Lower leg skin (tissue), 4 donors: ENCODE measurements at regions of chr4 and their contacts with region 1.

Region 1: DNA sequence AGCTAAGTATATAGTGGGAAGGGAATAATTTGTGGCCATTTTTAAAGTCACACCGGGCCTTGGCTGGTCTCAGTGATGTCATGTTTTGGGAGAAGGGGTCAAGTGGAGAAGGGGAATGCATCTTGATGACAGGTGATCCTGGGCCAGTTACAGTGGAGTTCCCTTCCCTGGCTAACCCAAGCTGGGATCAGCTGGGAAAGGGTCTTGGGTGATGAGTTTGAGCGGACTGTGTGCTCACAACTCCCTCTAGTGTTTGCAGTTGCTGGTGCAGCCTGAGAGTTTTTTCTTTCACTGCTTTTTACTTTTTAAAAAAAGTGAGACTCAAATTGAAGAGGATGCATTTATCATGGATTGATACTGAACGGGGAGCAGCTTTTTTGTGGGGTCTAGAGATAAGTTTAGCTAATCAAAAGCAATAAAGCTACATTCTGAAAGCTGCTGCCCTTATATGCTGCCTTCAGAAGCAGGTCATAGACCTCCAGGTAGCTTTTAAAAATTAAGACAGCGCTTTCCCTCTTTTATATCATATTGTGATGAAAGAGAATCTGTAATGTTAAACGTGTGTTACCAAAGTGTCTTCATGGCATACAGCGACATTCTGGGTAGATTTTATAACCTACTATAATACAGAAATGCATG is 164.7 kb downstream of the DCLK2 start:
- DNase-seq: no peak
- H3K4me3 ChIP-seq: no peak overlapping the region
- CTCF ChIP-seq: no peak
- POLR2A ChIP-seq: no peak

Region 2: GRCh38 chr4:149980941-149981340 is 262.0 kb before region 1 on chr4:
- intact Hi-C with region 1: loop called (anchors 10 kb)
- DNase-seq: peak in 1 of 2 donors; percentile 85
- H3K4me3 ChIP-seq: no peak overlapping the region
- CTCF ChIP-seq: no peak
- POLR2A ChIP-seq: no peak

Region 3: DNA sequence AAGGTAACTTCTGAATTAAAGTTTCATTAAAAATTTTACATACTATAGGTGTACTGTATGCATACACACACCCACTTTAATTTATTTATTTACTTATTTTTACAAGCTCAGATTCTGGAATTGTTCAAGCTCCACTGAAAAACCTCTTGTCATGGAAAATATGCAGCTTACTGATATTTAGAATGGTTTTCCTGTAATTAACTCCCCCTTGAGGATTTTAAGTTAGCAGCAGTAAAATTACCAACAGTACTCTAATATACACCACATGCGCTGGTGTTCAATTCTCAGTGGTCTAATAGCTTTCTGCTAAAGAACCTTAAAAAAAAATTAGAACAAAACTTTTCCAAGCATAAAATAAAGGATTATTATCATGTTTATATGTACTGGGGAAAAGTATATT is 351.1 kb after region 1 on chr4:
- intact Hi-C with region 1: no loop called
- DNase-seq: no peak
- H3K4me3 ChIP-seq: no peak overlapping the region
- CTCF ChIP-seq: no peak
- POLR2A ChIP-seq: no peak